Dorsolateral prefrontal cortex (tissue), 120 donors: ENCODE measurements at regions of chr7 and their contacts with region 1.

Region 1: DNA sequence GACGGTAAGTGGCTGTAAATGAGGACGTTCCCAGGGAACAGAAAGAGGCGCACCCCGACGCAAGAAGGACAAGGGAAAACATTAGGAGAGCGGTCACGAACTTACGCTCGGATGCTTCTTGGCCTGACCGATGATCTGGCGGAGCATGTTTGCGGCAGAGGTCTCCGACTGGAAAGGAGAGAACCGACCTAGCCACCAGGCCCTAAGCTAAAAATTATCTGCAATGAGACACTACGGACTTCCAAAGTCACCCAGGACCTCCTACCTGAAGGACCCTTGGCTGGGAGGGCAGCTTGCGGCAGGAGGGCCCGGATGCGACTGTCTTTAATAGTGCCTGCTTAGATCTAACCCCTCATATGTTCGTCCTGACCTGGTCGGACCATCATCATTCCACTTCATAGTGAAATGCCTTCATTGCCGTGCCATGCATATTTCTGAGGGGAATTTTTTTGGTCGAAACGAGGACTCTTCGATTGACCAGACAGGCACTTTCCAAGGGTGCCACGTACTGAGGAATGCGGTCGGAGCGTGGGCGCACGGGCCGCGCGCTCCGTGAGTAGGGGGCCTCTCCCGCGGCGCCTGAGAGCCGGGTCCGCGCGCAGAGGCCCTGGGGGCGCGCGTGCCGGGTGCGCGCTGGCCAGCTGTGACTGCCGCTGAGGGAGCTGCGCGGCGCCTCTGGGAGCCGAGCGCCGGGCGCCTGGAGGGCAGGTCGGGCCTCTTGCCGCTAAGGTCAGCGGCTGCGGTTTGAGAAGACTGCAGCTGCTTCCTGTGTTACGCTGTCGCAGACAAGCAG is 33.6 kb upstream of the PHF14 start:
- DNase-seq: peak; percentile 68 to 91 (median 85)
- H3K4me3 ChIP-seq: peak overlapping the region; percentile 65 to 99 (median 86)
- H3K27ac ChIP-seq: peak overlapping the region; percentile 89 to 100 (median 98)
- H3K27me3 ChIP-seq: no peaks in the 10 kb centered on the region
- CTCF ChIP-seq: peak in 21 of 56 donors; percentile 6 to 46 (median 25)

Region 2: GRCh38 chr7:10973061-10973944 is 33.2 kb after region 1 on chr7 and contains the start of gene PHF14:
- intact Hi-C with region 1: loop called (anchors 1 to 2 kb)
- DNase-seq: peak; percentile 94 to 97 (median 96)
- H3K4me3 ChIP-seq: peak within 1 kb of the TSS; percentile 57 to 96 (median 88)
- H3K27ac ChIP-seq: peak within 1 kb of the TSS; percentile 19 to 94 (median 85)
- H3K27me3 ChIP-seq: peaks cover 0 to 4% (median 0%) of the 10 kb centered on the region in 45 donors
- CTCF ChIP-seq: peak in 28 of 56 donors; percentile 10 to 60 (median 24)
- total RNA-seq, gene PHF14: 44.9 to 84.5 (median 61.5) TPM

Region 3: GRCh38 chr7:11212080-11212711 is 272.1 kb after region 1 on chr7:
- intact Hi-C with region 1: loop called in 1 of 2 experiments (anchors 10 kb)
- DNase-seq: peak in 6 of 10 donors; percentile 37 to 76 (median 50)
- H3K4me3 ChIP-seq: peak overlapping the region in 8 of 59 donors; percentile 7 to 34 (median 16)
- H3K27ac ChIP-seq: peak overlapping the region in 4 of 59 donors; percentile 9 to 60 (median 29)
- H3K27me3 ChIP-seq: no peaks in the 10 kb centered on the region
- CTCF ChIP-seq: peak; percentile 67 to 94 (median 86)